Activated naive CD4-positive, alpha-beta T cell treated with anti-CD3 and anti-CD28 coated beads, Interleukin-2, amount 10 ng/mL, durations not matched to agents 7 days and 5 days (primary cell): ENCODE measurements at regions of chr17 and their contacts with region 1.

Region 1: GRCh38 chr17:3913531-3914311 is 2.5 kb downstream of the P2RX1 start:
- DNase-seq: peak; percentile 87
- H3K4me3 Mint-ChIP-seq: no peak overlapping the region
- H3K27ac Mint-ChIP-seq: no peak overlapping the region
- H3K4me1 Mint-ChIP-seq: peaks cover 62% of the 10 kb centered on the region
- H3K27me3 Mint-ChIP-seq: peaks cover 25% of the 10 kb centered on the region

Region 2: GRCh38 chr17:3943240-3943891 is 29.6 kb after region 1 on chr17:
- CTCF ChIA-PET with region 1: no interaction called
- DNase-seq: no peak
- H3K4me3 Mint-ChIP-seq: no peak overlapping the region
- H3K27ac Mint-ChIP-seq: no peak overlapping the region
- H3K4me1 Mint-ChIP-seq: no peaks in the 10 kb centered on the region
- H3K27me3 Mint-ChIP-seq: no peaks in the 10 kb centered on the region

Region 3: DNA sequence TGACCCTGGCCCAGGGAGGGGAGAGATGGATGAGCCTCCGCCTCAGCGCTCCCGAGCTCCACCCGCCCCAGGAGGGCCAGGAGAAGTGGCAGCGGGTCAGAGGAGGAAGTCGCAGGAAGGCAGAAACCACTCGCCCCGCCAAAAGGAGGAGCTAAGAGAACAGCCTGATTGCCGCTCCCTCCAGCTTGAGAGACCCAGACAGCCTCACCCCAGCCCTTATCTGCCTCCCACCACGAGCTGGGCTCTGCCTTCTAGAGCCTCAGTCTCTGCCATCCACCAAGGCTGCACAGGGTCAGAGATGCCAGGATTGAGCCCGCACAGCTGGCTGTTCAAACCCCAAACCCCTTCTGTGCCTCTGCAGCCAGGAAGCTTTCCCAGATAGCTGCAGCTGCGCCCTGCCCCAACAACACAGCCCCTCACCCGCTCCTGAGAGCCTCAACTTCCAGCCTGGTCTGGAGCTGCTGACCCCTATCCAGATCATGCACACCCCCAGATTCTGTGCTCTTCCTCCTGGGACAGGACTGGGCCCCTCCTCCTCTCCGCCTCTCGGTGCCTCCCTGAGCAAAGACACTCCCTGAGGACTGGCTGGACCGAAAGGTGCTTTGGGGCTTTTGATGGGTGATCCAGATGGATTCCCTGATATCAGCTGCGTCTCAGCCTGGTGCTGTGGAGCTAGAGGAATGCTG is 51.5 kb after region 1 on chr17:
- CTCF ChIA-PET with region 1: interaction called, 11 read pairs
- DNase-seq: peak; percentile 86
- H3K4me3 Mint-ChIP-seq: peak overlapping the region; percentile 90
- H3K27ac Mint-ChIP-seq: peak overlapping the region; percentile 98
- H3K4me1 Mint-ChIP-seq: peaks cover 46% of the 10 kb centered on the region
- H3K27me3 Mint-ChIP-seq: peaks cover 27% of the 10 kb centered on the region

Region 4: DNA sequence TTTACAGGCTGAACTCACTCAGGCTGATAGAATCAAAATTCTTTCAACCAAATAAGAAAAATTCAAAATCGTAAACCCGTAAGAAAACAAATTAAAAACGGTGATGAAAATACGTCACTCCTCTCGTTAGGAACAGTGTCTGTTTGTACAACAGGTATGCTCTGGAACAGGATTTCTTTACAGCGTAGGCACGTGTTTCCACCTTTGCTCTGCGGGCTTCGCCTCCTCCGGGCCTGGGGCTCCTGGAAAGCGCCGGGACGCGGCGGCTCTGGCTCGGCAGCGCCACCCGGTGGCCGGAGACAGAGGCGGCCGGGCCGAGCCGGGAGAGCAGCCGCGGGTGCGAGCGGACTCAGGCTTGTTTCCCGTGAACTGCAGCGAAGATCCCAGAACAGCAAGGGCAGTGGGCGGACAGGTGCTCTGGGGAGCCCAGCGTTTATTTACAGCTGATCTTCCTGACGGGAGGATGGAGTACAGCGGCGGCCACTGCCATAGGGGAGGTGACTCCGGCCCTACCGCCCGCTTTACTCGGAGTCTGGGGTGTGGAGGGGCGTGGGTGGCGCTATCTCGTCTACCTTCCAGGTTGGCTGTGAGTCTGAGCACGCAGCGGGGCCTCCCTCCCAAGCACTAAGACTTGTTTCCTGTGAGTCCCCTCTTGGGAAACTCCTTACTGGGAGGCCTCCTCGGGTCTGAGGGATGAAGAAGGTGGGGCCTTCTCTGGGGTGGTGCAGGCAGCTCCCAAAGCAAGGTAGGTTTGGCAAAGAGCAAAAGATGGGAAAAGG is 91.0 kb after region 1 on chr17:
- CTCF ChIA-PET with region 1: interaction called, 128 read pairs
- DNase-seq: peak; percentile 66
- H3K4me3 Mint-ChIP-seq: no peak overlapping the region
- H3K27ac Mint-ChIP-seq: no peak overlapping the region
- H3K4me1 Mint-ChIP-seq: peaks cover 6% of the 10 kb centered on the region
- H3K27me3 Mint-ChIP-seq: peaks cover 4% of the 10 kb centered on the region

Region 5: DNA sequence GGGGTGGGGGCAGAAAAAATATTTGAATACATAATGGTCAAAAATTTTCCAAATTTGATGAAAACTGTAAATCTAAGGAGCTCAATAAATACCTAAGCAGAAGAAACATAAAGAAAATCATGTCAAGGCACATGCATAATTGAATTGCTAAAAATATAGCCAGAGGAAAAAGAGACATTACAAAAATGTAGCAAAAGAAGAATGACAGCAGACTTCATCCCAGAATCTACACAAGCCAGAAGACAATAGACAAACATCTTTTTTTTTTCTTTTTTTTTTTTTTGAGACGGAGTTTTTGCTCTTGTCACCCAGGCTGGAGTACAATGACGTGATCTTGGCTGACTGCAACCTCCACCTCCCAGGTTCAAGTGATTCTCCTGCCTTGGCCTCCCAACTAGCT is 112.5 kb after region 1 on chr17:
- CTCF ChIA-PET with region 1: no interaction called
- DNase-seq: no peak
- H3K4me3 Mint-ChIP-seq: no peak overlapping the region
- H3K27ac Mint-ChIP-seq: no peak overlapping the region
- H3K4me1 Mint-ChIP-seq: no peaks in the 10 kb centered on the region
- H3K27me3 Mint-ChIP-seq: no peaks in the 10 kb centered on the region